Aorta (tissue), 5 donors: ENCODE measurements at regions of chr2 and their contacts with region 1.

Region 1: GRCh38 chr2:191245046-191245868 is at the start of gene MYO1B:
- DNase-seq: peak; percentile 74 to 92
- ATAC-seq: peak; percentile 83
- H3K4me3 ChIP-seq: peak within 1 kb of the TSS; percentile 72 to 88
- H3K27ac ChIP-seq: peak within 1 kb of the TSS in 1 of 2 donors; percentile 41
- H3K4me1 ChIP-seq: peaks cover 0 to 2% of the 10 kb centered on the region in 2 donors
- H3K27me3 ChIP-seq: no peaks in the 10 kb centered on the region
- total RNA-seq, gene MYO1B: 61.1 to 86.4 TPM

Region 2: GRCh38 chr2:191280304-191280703 is 35.0 kb after region 1 on chr2:
- intact Hi-C with region 1: no loop called
- DNase-seq: no peak
- ATAC-seq: no peak
- H3K4me3 ChIP-seq: no peak overlapping the region
- H3K27ac ChIP-seq: no peak overlapping the region
- H3K4me1 ChIP-seq: no peaks in the 10 kb centered on the region
- H3K27me3 ChIP-seq: no peaks in the 10 kb centered on the region

Region 3: DNA sequence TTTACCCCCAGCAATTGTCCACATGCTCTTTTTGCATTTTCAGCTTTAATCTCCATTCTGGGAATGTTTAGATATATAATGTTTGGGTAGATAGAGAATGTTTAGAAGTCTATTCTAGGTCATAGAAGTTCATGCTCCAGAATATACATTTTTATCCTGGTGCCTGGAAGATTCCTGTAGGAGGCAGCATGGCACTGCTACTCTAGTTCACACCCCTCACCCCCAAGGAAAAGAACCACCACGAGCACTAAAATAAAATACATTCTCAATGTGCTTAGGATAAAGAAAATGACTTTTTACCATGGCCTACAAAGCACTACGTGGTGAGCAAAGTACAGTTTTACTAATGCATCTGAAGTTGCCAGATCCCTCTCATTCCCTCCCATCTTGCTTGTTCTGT is 53.8 kb after region 1 on chr2:
- intact Hi-C with region 1: loop called in 1 of 2 experiments (anchors 5 kb)
- DNase-seq: no peak
- ATAC-seq: peak; percentile 20
- H3K4me3 ChIP-seq: no peak overlapping the region
- H3K27ac ChIP-seq: peak overlapping the region in 1 of 2 donors; percentile 82
- H3K4me1 ChIP-seq: peaks cover 7 to 30% of the 10 kb centered on the region in 2 donors
- H3K27me3 ChIP-seq: no peaks in the 10 kb centered on the region

Region 4: DNA sequence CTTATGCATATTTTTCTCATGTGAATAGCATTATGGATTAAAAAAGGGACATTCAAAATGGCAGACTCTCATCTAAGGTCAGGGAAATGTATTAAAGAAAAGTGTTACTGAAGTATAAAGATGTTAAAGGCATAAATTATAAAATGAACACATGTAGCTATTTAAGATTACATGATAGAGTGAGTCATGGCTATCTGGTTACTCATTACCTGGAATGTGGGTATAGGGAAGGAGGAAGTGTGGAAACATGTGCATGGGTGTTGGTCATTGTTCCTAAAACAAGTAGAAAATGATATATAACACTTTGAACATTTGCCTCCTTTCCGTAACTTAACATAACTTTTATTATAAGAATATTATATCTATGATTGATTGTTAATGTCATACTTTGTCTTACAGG is 66.4 kb after region 1 on chr2:
- intact Hi-C with region 1: loop called in 1 of 2 experiments (anchors 5 kb)
- DNase-seq: no peak
- ATAC-seq: no peak
- H3K4me3 ChIP-seq: no peak overlapping the region
- H3K27ac ChIP-seq: no peak overlapping the region
- H3K4me1 ChIP-seq: no peaks in the 10 kb centered on the region
- H3K27me3 ChIP-seq: no peaks in the 10 kb centered on the region

Region 5: DNA sequence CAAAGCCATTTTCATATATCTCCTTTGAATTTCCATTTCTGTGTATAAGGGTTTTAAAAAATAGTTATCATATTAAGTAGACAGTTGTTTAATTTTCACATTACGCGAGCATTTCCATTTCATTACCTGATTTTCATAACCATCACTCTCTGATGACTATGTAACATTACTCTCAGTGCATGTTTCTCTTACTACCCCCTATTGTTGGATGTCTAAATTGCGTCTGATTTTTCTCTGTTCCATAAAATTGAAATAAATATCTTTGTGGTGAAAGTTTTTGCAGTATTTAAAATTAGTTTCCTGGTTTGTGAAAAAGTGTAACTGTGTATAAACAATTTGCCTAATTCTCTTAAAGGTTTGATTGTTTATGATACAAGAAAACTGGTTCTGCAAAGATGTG is 123.8 kb after region 1 on chr2:
- intact Hi-C with region 1: loop called (anchors 5 to 10 kb)
- DNase-seq: no peak
- ATAC-seq: no peak
- H3K4me3 ChIP-seq: no peak overlapping the region
- H3K27ac ChIP-seq: no peak overlapping the region
- H3K4me1 ChIP-seq: peaks cover 6 to 14% of the 10 kb centered on the region in 2 donors
- H3K27me3 ChIP-seq: no peaks in the 10 kb centered on the region

Region 6: GRCh38 chr2:191386938-191387536 is 141.8 kb after region 1 on chr2:
- intact Hi-C with region 1: loop called (anchors 5 kb)
- DNase-seq: no peak
- ATAC-seq: no peak
- H3K4me3 ChIP-seq: no peak overlapping the region
- H3K27ac ChIP-seq: peak overlapping the region in 1 of 2 donors; percentile 83
- H3K4me1 ChIP-seq: peaks cover 2 to 9% of the 10 kb centered on the region in 2 donors
- H3K27me3 ChIP-seq: no peaks in the 10 kb centered on the region